ENCODE measurements at regions of chr22 and their contacts with region 1.

Region 1: GRCh38 chr22:26672590-26673468 is 15.4 kb downstream of the MIAT start:
- DNase-seq: peak; percentile 88 to 93
- ATAC-seq: peak; percentile 92 to 96 (median 94)
- H3K4me3 ChIP-seq: peak overlapping the region; percentile 42 to 95 (median 84)
- H3K27ac ChIP-seq: peak overlapping the region; percentile 87 to 98 (median 98)
- H3K4me1 ChIP-seq: peaks cover 8 to 49% (median 29%) of the 10 kb centered on the region in 9 donors
- H3K27me3 ChIP-seq: no peaks in the 10 kb centered on the region
- CTCF ChIP-seq: peak; percentile 10 to 82 (median 69)

Region 2: GRCh38 chr22:26364066-26365015 is 308.5 kb before region 1 on chr22:
- intact Hi-C with region 1: loop called in 1 of 10 experiments (anchors 10 kb)
- DNase-seq: peak; percentile 17 to 53
- ATAC-seq: peak; percentile 72 to 91 (median 84)
- H3K4me3 ChIP-seq: no peak overlapping the region
- H3K27ac ChIP-seq: no peak overlapping the region
- H3K4me1 ChIP-seq: peaks cover 2 to 11% (median 5%) of the 10 kb centered on the region in 9 donors
- H3K27me3 ChIP-seq: peaks cover 0 to 43% (median 27%) of the 10 kb centered on the region in 7 donors
- CTCF ChIP-seq: peak; percentile 27 to 75 (median 65)

Region 3: GRCh38 chr22:26398741-26399153 is 274.1 kb before region 1 on chr22:
- intact Hi-C with region 1: loop called in 3 of 10 experiments (anchors 5 to 10 kb)
- DNase-seq: peak; percentile 21 to 43
- ATAC-seq: peak in 6 of 8 donors; percentile 41 to 76 (median 55)
- H3K4me3 ChIP-seq: no peak overlapping the region
- H3K27ac ChIP-seq: no peak overlapping the region
- H3K4me1 ChIP-seq: no peaks in the 10 kb centered on the region
- H3K27me3 ChIP-seq: peaks cover 0 to 35% (median 11%) of the 10 kb centered on the region in 7 donors
- CTCF ChIP-seq: peak; percentile 35 to 75 (median 62)

Region 4: DNA sequence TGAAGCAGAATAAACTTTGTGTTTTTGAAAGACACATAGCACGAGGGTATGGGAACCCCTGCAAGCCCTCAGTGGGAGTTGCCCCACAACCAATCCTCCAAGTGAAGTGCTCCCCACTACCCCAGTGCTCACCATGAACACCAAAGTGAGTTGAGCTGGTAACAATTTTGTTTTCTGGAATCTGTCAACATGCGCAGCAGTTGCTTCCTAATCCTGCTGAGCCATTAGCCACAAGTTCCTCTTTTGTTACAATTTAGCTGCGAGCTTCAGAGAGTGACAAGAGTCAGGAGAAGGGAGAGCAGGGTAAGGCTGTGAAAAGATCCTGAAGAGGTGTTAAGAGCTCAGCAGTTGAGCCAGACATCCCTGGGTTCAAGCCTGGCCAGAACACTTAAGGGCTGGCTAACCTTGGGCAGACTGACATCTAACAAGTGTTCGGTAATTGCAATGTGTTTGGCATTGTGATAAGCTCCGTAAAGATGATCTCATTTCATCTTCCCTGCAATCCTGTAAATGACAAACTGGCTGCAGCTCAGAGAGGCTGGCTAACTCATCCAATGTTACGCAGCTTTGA is 267.9 kb before region 1 on chr22:
- intact Hi-C with region 1: loop called in 1 of 10 experiments (anchors 5 kb)
- DNase-seq: no peak
- ATAC-seq: peak in 2 of 8 donors; percentile 30 to 50
- H3K4me3 ChIP-seq: no peak overlapping the region
- H3K27ac ChIP-seq: no peak overlapping the region
- H3K4me1 ChIP-seq: peaks cover 0 to 15% (median 0%) of the 10 kb centered on the region in 9 donors
- H3K27me3 ChIP-seq: peaks cover 0 to 57% (median 25%) of the 10 kb centered on the region in 7 donors
- CTCF ChIP-seq: no peak

Region 5: GRCh38 chr22:26848244-26848920 is 175.6 kb after region 1 on chr22:
- intact Hi-C with region 1: no loop called
- DNase-seq: no peak
- ATAC-seq: peak in 3 of 8 donors; percentile 37 to 46 (median 37)
- H3K4me3 ChIP-seq: no peak overlapping the region
- H3K27ac ChIP-seq: no peak overlapping the region
- H3K4me1 ChIP-seq: peaks cover 0 to 10% (median 0%) of the 10 kb centered on the region in 9 donors
- H3K27me3 ChIP-seq: no peaks in the 10 kb centered on the region
- CTCF ChIP-seq: no peak

Region 6: GRCh38 chr22:26956371-26956770 is 283.5 kb after region 1 on chr22:
- intact Hi-C with region 1: no loop called
- DNase-seq: no peak
- ATAC-seq: no peak
- H3K4me3 ChIP-seq: no peak overlapping the region
- H3K27ac ChIP-seq: no peak overlapping the region
- H3K4me1 ChIP-seq: peaks cover 0 to 10% (median 0%) of the 10 kb centered on the region in 9 donors
- H3K27me3 ChIP-seq: peaks cover 0 to 83% (median 63%) of the 10 kb centered on the region in 7 donors
- CTCF ChIP-seq: no peak